RWPE1 (cell line): ENCODE measurements at regions of chr9 and their contacts with region 1.

Region 1: DNA sequence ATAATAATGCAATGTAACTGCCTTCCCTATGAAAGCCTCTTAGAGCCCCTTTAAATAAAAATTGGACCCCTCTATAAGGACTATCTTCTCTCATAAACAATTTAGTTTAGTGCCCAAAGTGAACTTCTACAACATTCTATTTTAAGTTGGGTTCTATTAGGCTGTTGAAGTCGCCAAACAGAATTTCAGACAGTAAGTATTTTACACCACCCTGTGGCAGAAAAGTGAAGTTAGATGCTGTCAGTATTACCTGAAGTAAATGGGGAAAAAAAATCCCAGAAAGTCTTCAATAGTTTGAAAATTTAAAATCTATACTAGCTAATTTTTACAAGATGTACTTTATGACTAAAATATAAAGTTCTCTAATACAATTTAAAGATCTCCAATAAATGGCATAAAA is 29.5 kb downstream of the CAAP1 start:
- DNase-seq: peak; percentile 8
- H3K27ac ChIP-seq: no peak overlapping the region
- CTCF ChIP-seq: peak; percentile 58

Region 2: GRCh38 chr9:26892251-26893029 is 29.4 kb after region 1 on chr9 and contains the start of gene CAAP1:
- CTCF ChIA-PET with region 1: interaction called, 10 read pairs
- POLR2A ChIA-PET with region 1: no interaction called
- DNase-seq: peak; percentile 94
- H3K27ac ChIP-seq: peak within 1 kb of the TSS; percentile 99
- CTCF ChIP-seq: peak; percentile 75